ENCODE measurements at regions of chr19 and their contacts with region 1.

Region 1: GRCh38 chr19:2977001-2977685 is at the start of gene TLE6:
- DNase-seq: peak; percentile 94
- ATAC-seq: peak; percentile 100
- H3K4me3 Mint-ChIP-seq: peak within 1 kb of the TSS; percentile 99
- H3K27ac Mint-ChIP-seq: peak within 1 kb of the TSS; percentile 96
- H3K4me1 Mint-ChIP-seq: peaks cover 16% of the 10 kb centered on the region
- H3K27me3 Mint-ChIP-seq: peaks cover 19% of the 10 kb centered on the region
- total RNA-seq, gene TLE6: 4.4 to 5.4 TPM

Region 2: GRCh38 chr19:3012621-3013260 is 35.6 kb after region 1 on chr19:
- POLR2A ChIA-PET with region 1: no interaction called
- DNase-seq: no peak
- ATAC-seq: no peak
- H3K4me3 Mint-ChIP-seq: no peak overlapping the region
- H3K27ac Mint-ChIP-seq: no peak overlapping the region
- H3K4me1 Mint-ChIP-seq: no peaks in the 10 kb centered on the region
- H3K27me3 Mint-ChIP-seq: no peaks in the 10 kb centered on the region

Region 3: GRCh38 chr19:3062168-3063102 is 85.3 kb after region 1 on chr19 and contains the start of gene TLE5:
- POLR2A ChIA-PET with region 1: interaction called, 10 read pairs
- DNase-seq: peak; percentile 83
- ATAC-seq: peak; percentile 30
- H3K4me3 Mint-ChIP-seq: peak within 1 kb of the TSS; percentile 90
- H3K27ac Mint-ChIP-seq: peak within 1 kb of the TSS; percentile 93
- H3K4me1 Mint-ChIP-seq: peaks cover 27% of the 10 kb centered on the region
- H3K27me3 Mint-ChIP-seq: no peaks in the 10 kb centered on the region
- total RNA-seq, gene TLE5: 697 to 718 TPM